ENCODE measurements at regions of chr11 and their contacts with region 1.

Region 1: GRCh38 chr11:68121067-68121899 is at the start of gene CHKA:
- DNase-seq: peak; percentile 61 to 93 (median 80)
- ATAC-seq: peak; percentile 71
- H3K4me3 ChIP-seq: peak within 1 kb of the TSS; percentile 66
- H3K4me3 Mint-ChIP-seq: peak within 1 kb of the TSS; percentile 88
- H3K27ac ChIP-seq: peak within 1 kb of the TSS in 1 of 2 donors; percentile 23
- H3K27ac Mint-ChIP-seq: peak within 1 kb of the TSS; percentile 85
- H3K4me1 ChIP-seq: peaks cover 15% of the 10 kb centered on the region
- H3K4me1 Mint-ChIP-seq: peaks cover 9% of the 10 kb centered on the region
- H3K27me3 ChIP-seq: no peaks in the 10 kb centered on the region
- H3K27me3 Mint-ChIP-seq: peaks cover under 1% of the 10 kb centered on the region
- CTCF ChIP-seq: no peak
- total RNA-seq, gene CHKA: 30.1 to 31.4 TPM

Region 2: GRCh38 chr11:68030318-68031138 is 90.8 kb before region 1 on chr11 and contains the start of gene NDUFS8:
- CTCF ChIA-PET with region 1: no interaction called
- POLR2A ChIA-PET with region 1: interaction called, 3 read pairs
- intact Hi-C with region 1: loop called in 1 of 2 experiments (anchors 2 kb)
- DNase-seq: peak; percentile 90 to 99 (median 94)
- ATAC-seq: peak; percentile 95
- H3K4me3 ChIP-seq: peak within 1 kb of the TSS; percentile 79
- H3K4me3 Mint-ChIP-seq: peak within 1 kb of the TSS; percentile 94
- H3K27ac ChIP-seq: peak within 1 kb of the TSS; percentile 76 to 79
- H3K27ac Mint-ChIP-seq: peak within 1 kb of the TSS; percentile 87
- H3K4me1 ChIP-seq: peaks cover 43% of the 10 kb centered on the region
- H3K4me1 Mint-ChIP-seq: peaks cover 24% of the 10 kb centered on the region
- H3K27me3 ChIP-seq: no peaks in the 10 kb centered on the region
- H3K27me3 Mint-ChIP-seq: no peaks in the 10 kb centered on the region
- CTCF ChIP-seq: no peak
- total RNA-seq, gene NDUFS8: 70.5 to 72.5 TPM

Region 3: GRCh38 chr11:68066742-68067141 is 54.5 kb before region 1 on chr11:
- CTCF ChIA-PET with region 1: no interaction called
- POLR2A ChIA-PET with region 1: no interaction called
- intact Hi-C with region 1: no loop called
- DNase-seq: peak in 1 of 14 experiments; percentile 1
- ATAC-seq: no peak
- H3K4me3 ChIP-seq: no peak overlapping the region
- H3K4me3 Mint-ChIP-seq: no peak overlapping the region
- H3K27ac ChIP-seq: no peak overlapping the region
- H3K27ac Mint-ChIP-seq: no peak overlapping the region
- H3K4me1 ChIP-seq: no peaks in the 10 kb centered on the region
- H3K4me1 Mint-ChIP-seq: no peaks in the 10 kb centered on the region
- H3K27me3 ChIP-seq: no peaks in the 10 kb centered on the region
- H3K27me3 Mint-ChIP-seq: no peaks in the 10 kb centered on the region
- CTCF ChIP-seq: no peak

Region 4: DNA sequence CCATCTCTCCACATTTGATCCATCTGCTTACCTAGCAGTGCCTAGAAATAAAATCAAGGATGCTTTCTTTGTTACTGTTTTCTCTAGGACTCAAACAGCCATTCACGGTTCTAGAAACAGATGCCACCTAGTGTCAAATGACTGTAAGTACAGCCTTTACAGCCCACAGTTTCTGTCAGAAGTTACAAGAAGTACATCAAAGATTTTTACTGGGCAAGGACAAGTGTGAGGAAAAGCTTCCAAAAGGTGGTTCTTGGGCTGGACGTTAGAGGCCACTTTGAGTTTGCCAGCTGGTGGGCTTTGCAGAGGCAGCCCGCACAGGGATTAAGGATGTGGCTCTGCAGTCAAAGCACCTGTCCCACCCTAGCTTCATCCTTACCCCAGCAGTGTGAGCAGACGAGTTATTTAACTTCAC is 84.9 kb after region 1 on chr11:
- CTCF ChIA-PET with region 1: interaction called, 4 read pairs
- POLR2A ChIA-PET with region 1: no interaction called
- intact Hi-C with region 1: loop called in 1 of 2 experiments (anchors 10 kb)
- DNase-seq: peak in 3 of 14 experiments; percentile 63 to 76 (median 75)
- ATAC-seq: peak; percentile 67
- H3K4me3 ChIP-seq: no peak overlapping the region
- H3K4me3 Mint-ChIP-seq: peak overlapping the region; percentile 34
- H3K27ac ChIP-seq: no peak overlapping the region
- H3K27ac Mint-ChIP-seq: peak overlapping the region; percentile 25
- H3K4me1 ChIP-seq: peaks cover 57% of the 10 kb centered on the region
- H3K4me1 Mint-ChIP-seq: peaks cover 71% of the 10 kb centered on the region
- H3K27me3 ChIP-seq: no peaks in the 10 kb centered on the region
- H3K27me3 Mint-ChIP-seq: no peaks in the 10 kb centered on the region
- CTCF ChIP-seq: peak; percentile 74

Region 5: GRCh38 chr11:68213555-68214174 is 92.4 kb after region 1 on chr11:
- CTCF ChIA-PET with region 1: interaction called, 4 read pairs
- POLR2A ChIA-PET with region 1: no interaction called
- intact Hi-C with region 1: loop called (anchors 2 to 10 kb)
- DNase-seq: peak; percentile 60 to 95 (median 80)
- ATAC-seq: peak; percentile 32
- H3K4me3 ChIP-seq: peak overlapping the region; percentile 78
- H3K4me3 Mint-ChIP-seq: peak overlapping the region; percentile 73
- H3K27ac ChIP-seq: peak overlapping the region in 1 of 2 donors; percentile 74
- H3K27ac Mint-ChIP-seq: peak overlapping the region; percentile 77
- H3K4me1 ChIP-seq: peaks cover 41% of the 10 kb centered on the region
- H3K4me1 Mint-ChIP-seq: peaks cover 51% of the 10 kb centered on the region
- H3K27me3 ChIP-seq: no peaks in the 10 kb centered on the region
- H3K27me3 Mint-ChIP-seq: peaks cover 13% of the 10 kb centered on the region
- CTCF ChIP-seq: no peak

Region 6: DNA sequence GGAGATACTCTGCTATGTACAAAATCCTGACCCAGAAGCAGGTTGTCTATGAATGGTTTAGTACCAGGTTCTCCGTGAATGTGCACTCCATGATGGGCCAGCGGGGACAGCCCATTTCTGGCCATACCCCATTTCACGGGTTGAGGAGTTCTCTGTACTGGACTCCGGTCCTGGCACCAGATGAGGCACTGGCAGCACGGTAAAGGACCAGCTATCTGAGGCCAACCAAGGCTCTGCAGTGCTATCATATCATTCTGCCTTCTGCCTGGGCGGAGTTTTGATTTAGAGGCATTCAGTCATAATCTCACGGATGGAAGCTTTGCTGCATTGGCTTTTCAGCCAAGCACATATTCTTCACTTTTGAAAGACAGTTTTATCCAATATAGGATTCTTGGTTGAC is 110.3 kb after region 1 on chr11:
- CTCF ChIA-PET with region 1: no interaction called
- POLR2A ChIA-PET with region 1: no interaction called
- intact Hi-C with region 1: no loop called
- DNase-seq: no peak
- ATAC-seq: no peak
- H3K4me3 ChIP-seq: no peak overlapping the region
- H3K4me3 Mint-ChIP-seq: no peak overlapping the region
- H3K27ac ChIP-seq: no peak overlapping the region
- H3K27ac Mint-ChIP-seq: no peak overlapping the region
- H3K4me1 ChIP-seq: no peaks in the 10 kb centered on the region
- H3K4me1 Mint-ChIP-seq: no peaks in the 10 kb centered on the region
- H3K27me3 ChIP-seq: peaks cover 0 to 6% of the 10 kb centered on the region in 2 experiments
- H3K27me3 Mint-ChIP-seq: peaks cover 7% of the 10 kb centered on the region
- CTCF ChIP-seq: no peak

Region 7: DNA sequence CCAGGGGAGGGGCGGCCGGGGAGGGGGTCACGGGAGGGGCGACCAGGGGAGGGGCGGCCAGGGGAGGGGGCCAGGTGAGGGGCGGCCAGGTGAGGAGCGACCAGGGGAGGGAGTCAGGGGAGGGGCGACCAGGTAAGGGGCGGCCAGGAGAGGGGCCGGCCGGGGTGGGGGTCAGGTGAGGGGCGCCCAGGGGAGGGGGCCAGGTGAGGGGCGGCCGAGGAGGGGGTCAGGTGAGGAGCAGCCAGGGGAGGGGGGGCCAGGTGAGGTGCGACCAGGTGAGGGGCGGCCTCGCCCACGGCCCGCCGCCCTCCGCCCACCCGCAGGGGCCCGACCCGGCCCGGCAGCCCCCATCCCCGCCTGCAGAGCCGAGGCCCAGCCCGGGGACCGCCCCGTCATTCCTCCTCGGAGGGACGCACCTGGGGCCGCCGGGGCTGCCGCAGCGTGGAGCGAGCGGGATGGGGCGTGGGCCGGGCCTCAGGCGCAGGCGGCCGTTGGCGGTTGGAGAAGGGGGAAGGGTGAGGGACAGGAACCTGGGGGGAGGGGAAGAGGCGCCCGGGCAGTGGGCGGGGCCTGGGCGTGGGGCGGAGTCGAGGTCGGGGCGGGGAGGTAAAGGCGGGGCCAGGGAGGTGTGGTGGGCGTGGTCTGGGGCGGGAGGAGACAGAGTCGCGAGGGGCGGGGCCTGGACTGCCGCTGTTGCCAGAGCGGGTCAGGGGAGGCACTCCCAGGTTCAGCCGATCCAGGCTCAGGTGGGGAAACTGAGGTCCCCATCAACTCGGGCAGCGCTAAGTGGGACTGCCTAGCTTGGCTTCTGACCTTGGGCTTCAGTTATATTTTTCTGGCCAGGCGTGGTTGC is 629.9 kb after region 1 on chr11 and contains the start of gene TESMIN:
- CTCF ChIA-PET with region 1: no interaction called
- POLR2A ChIA-PET with region 1: no interaction called
- intact Hi-C with region 1: loop called in 1 of 2 experiments (anchors 5 kb)
- DNase-seq: peak; percentile 86 to 97 (median 94)
- ATAC-seq: peak; percentile 94
- H3K4me3 ChIP-seq: peak within 1 kb of the TSS; percentile 41
- H3K4me3 Mint-ChIP-seq: peak within 1 kb of the TSS; percentile 81
- H3K27ac ChIP-seq: no peak within 1 kb of the TSS
- H3K27ac Mint-ChIP-seq: no peak within 1 kb of the TSS
- H3K4me1 ChIP-seq: peaks cover 18% of the 10 kb centered on the region
- H3K4me1 Mint-ChIP-seq: peaks cover 11% of the 10 kb centered on the region
- H3K27me3 ChIP-seq: no peaks in the 10 kb centered on the region
- H3K27me3 Mint-ChIP-seq: no peaks in the 10 kb centered on the region
- CTCF ChIP-seq: no peak
- total RNA-seq, gene TESMIN: 3.7 to 4.3 TPM